Activated naive CD4-positive, alpha-beta T cell treated with anti-CD3 and anti-CD28 coated beads, Interleukin-2, amount 10 ng/mL, durations not matched to agents 7 days and 5 days (primary cell): ENCODE measurements at regions of chr22 and their contacts with region 1.

Region 1: DNA sequence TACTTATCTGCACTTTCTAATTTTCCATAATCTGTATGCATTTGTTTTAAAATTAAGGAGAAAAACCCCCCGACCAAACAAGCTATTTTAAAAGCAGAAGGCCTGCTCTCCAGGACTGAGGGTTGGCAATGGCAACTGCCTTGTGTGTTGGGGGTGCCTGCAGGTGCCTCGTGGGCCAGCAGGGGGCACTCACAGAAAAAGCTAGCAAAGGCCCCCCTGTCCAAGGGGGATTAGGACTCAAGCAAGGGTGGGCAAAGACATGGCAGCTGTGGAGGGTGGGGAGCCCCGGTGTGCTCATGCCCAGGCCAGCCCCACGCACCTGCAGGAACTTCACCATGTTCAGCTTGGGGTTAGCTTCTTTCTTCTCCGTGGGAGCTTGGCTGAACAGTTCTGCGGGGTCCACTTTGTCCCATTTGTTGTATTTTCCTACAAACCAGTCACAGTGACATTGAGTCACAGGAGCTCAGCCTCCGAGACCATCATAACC is 10.3 kb downstream of the TOP3B start:
- DNase-seq: peak; percentile 68
- H3K4me3 Mint-ChIP-seq: no peak overlapping the region
- H3K27ac Mint-ChIP-seq: no peak overlapping the region
- H3K4me1 Mint-ChIP-seq: no peaks in the 10 kb centered on the region
- H3K27me3 Mint-ChIP-seq: no peaks in the 10 kb centered on the region

Region 2: DNA sequence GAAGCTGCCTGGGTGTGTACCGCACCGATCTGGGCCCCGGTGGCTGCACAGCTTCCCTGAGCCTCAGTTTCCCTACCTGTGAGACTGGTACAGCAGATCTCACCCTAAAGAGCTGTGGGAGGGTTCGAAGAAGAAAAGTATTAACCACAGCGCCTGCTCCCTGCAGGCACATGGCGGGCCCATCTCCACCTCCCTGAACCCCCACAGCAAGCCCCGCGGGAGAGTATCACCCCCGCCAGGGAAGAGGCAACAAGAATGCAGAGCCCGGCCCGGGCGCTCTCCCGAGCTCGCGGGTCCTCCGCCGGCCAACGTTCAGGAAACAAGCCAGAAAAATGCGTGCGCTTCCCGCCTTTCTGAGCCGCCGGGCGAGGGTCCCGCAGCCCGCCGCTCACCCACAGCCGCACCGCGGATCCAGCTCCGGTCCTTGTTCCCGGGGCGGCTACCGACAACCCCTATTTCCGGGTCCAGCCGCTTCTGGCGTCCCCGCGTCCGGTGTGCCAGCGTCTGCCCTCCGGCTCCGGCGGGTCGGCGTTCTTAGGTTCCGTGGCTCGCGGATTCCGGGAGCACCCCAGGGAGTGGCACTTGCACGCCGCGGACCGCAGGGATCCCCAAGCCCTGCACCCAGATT is 10.1 kb after region 1 on chr22 and contains the start of gene TOP3B:
- CTCF ChIA-PET with region 1: interaction called, 28 read pairs
- DNase-seq: peak; percentile 86
- H3K4me3 Mint-ChIP-seq: peak within 1 kb of the TSS; percentile 90
- H3K27ac Mint-ChIP-seq: peak within 1 kb of the TSS; percentile 83
- H3K4me1 Mint-ChIP-seq: peaks cover 37% of the 10 kb centered on the region
- H3K27me3 Mint-ChIP-seq: no peaks in the 10 kb centered on the region

Region 3: GRCh38 chr22:22123118-22123959 is 151.0 kb after region 1 on chr22:
- CTCF ChIA-PET with region 1: no interaction called
- DNase-seq: no peak
- H3K4me3 Mint-ChIP-seq: no peak overlapping the region
- H3K27ac Mint-ChIP-seq: no peak overlapping the region
- H3K4me1 Mint-ChIP-seq: peaks cover 1% of the 10 kb centered on the region
- H3K27me3 Mint-ChIP-seq: peaks cover 38% of the 10 kb centered on the region